ENCODE measurements at regions of chr11 and their contacts with region 1.

Region 1: GRCh38 chr11:59753650-59754493 is 1.3 kb upstream of the STX3 start:
- DNase-seq: peak; percentile 85
- H3K4me3 ChIP-seq: peak overlapping the region; percentile 86
- H3K27ac ChIP-seq: no peak overlapping the region
- H3K4me1 ChIP-seq: peaks cover 16% of the 10 kb centered on the region
- CTCF ChIP-seq: peak; percentile 89

Region 2: GRCh38 chr11:59394186-59394585 is 359.7 kb before region 1 on chr11:
- CTCF ChIA-PET with region 1: no interaction called
- POLR2A ChIA-PET with region 1: no interaction called
- intact Hi-C with region 1: no loop called
- DNase-seq: no peak
- H3K4me3 ChIP-seq: no peak overlapping the region
- H3K27ac ChIP-seq: no peak overlapping the region
- H3K4me1 ChIP-seq: no peaks in the 10 kb centered on the region
- CTCF ChIP-seq: no peak

Region 3: DNA sequence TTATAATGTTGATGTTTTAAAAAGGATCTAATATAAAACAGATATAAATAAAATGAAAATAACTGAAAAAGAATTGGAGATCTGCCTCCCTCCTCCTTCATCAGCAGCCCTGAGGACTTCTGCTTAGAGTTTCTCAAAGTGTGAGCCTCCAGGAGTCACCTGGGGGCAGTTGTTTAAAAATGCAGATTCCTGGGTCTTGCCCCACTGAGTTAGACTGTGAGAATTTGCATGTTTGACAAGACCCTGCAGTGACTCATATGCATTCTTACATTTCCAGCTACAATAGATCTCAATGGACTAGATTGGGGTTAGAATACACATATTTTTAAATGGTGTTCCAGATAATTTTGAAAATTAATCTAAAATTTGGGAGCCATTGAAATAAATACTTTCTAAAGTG is 123.9 kb after region 1 on chr11:
- CTCF ChIA-PET with region 1: no interaction called
- POLR2A ChIA-PET with region 1: no interaction called
- intact Hi-C with region 1: no loop called
- DNase-seq: no peak
- H3K4me3 ChIP-seq: no peak overlapping the region
- H3K27ac ChIP-seq: no peak overlapping the region
- H3K4me1 ChIP-seq: no peaks in the 10 kb centered on the region
- CTCF ChIP-seq: no peak

Region 4: DNA sequence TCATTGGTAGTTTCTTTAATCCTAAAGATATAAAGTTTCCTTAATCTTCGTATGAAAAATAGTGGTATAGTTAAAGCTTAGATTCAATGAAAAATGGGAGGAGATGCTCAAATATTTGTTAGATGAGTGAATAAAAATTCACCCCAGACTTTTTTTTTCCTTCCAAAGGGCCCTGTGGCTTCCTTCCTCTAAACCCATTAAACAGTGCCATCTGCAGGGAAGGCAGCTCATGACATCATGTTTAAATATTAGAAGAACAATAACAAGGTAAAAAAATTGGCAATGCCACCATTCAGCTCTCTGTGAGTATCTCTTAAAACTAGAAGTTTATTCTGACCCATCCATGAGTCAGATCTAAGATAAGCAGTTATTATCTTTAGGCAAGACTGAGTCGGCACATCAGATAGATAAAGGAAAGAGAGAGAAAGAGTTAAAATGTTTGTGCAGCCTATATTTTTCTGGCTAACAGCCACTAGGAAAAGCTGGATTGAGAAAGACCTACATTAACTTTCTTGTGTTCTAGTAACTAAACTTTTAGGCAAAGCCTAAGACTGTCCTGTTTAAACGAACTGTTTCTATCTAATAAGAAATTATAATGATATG is 165.2 kb after region 1 on chr11:
- CTCF ChIA-PET with region 1: no interaction called
- POLR2A ChIA-PET with region 1: no interaction called
- intact Hi-C with region 1: loop called (anchors 2 kb)
- DNase-seq: peak; percentile 64
- H3K4me3 ChIP-seq: no peak overlapping the region
- H3K27ac ChIP-seq: no peak overlapping the region
- H3K4me1 ChIP-seq: no peaks in the 10 kb centered on the region
- CTCF ChIP-seq: peak; percentile 88